ENCODE measurements at regions of chr16 and their contacts with region 1.

Region 1: GRCh38 chr16:49755313-49755620 is 100.6 kb downstream of the ZNF423 start:
- DNase-seq: peak in 1 of 5 donors; percentile 30
- ATAC-seq: peak; percentile 26 to 82 (median 64)
- H3K4me3 ChIP-seq: peak overlapping the region in 11 of 12 donors; percentile 19 to 55 (median 46)
- H3K27ac ChIP-seq: peak overlapping the region in 11 of 12 donors; percentile 52 to 92 (median 85)
- H3K4me1 ChIP-seq: peaks cover 0 to 45% (median 23%) of the 10 kb centered on the region in 12 donors
- H3K27me3 ChIP-seq: peaks cover 0 to 4% (median 0%) of the 10 kb centered on the region in 9 donors
- CTCF ChIP-seq: peak; percentile 19 to 72 (median 58)
- POLR2A ChIP-seq: no peak

Region 2: GRCh38 chr16:49484451-49484849 is 270.8 kb before region 1 on chr16:
- intact Hi-C with region 1: loop called in 1 of 10 experiments (anchors 10 kb)
- DNase-seq: peak; percentile 70 to 89 (median 77)
- ATAC-seq: peak; percentile 99 to 100 (median 100)
- H3K4me3 ChIP-seq: peak overlapping the region in 10 of 12 donors; percentile 2 to 44 (median 24)
- H3K27ac ChIP-seq: peak overlapping the region in 1 of 12 donors; percentile 34
- H3K4me1 ChIP-seq: peaks cover 0 to 13% (median 6%) of the 10 kb centered on the region in 12 donors
- H3K27me3 ChIP-seq: no peaks in the 10 kb centered on the region
- CTCF ChIP-seq: no peak
- POLR2A ChIP-seq: no peak

Region 3: DNA sequence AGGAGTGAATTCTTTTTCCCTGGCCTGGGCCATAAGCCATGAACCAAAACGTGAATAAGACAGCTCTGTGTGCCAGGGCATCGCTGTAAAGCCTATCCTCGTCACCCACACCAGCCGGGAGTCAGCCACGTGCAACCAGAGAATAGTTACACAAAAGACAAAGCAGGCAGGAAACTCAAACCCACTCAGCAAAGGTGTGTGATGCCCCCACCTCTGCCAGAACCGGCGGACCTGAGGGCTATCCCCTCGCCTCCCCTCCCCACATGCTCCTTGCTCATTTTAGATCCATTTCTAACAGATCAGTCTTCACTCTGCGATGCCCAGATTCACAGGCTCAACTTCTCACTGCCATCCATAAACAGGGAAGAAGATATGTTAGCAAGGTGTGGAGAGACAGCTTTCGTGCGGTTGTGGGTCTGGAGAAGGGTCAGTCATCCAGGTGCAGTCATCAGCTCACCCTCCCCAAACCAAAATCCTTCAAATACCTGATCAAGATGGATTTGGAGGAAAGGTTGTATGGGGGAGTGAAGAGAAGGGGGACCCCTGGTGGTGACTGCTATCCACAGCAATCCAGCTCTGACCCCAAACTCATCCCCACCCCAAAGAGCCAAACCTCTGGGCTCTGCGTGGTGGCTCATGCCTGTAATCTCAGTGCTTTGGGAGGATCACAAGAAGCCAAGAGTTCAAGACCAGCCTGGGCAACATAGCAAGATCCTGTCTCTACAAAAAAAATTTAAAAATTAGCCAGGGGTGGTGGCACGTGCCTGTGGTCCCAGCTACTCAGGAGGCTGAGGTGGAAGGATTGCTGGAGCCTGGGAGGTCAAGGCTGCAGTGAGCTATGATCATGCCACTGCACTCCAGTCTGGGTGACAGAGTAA is 162.5 kb before region 1 on chr16:
- intact Hi-C with region 1: loop called in 1 of 10 experiments (anchors 10 kb)
- DNase-seq: peak in 1 of 5 donors; percentile 28
- ATAC-seq: peak in 3 of 4 donors; percentile 49 to 58 (median 56)
- H3K4me3 ChIP-seq: no peak overlapping the region
- H3K27ac ChIP-seq: no peak overlapping the region
- H3K4me1 ChIP-seq: peaks cover 0 to 28% (median 11%) of the 10 kb centered on the region in 12 donors
- H3K27me3 ChIP-seq: peaks cover 0 to 2% (median 0%) of the 10 kb centered on the region in 9 donors
- CTCF ChIP-seq: peak; percentile 63 to 84 (median 75)
- POLR2A ChIP-seq: no peak

Region 4: GRCh38 chr16:49608779-49609178 is 146.5 kb before region 1 on chr16:
- intact Hi-C with region 1: loop called in 3 of 10 experiments (anchors 5 to 10 kb)
- DNase-seq: no peak
- ATAC-seq: peak; percentile 58 to 90 (median 88)
- H3K4me3 ChIP-seq: no peak overlapping the region
- H3K27ac ChIP-seq: no peak overlapping the region
- H3K4me1 ChIP-seq: peaks cover 0 to 2% (median 0%) of the 10 kb centered on the region in 12 donors
- H3K27me3 ChIP-seq: no peaks in the 10 kb centered on the region
- CTCF ChIP-seq: peak; percentile 31 to 68 (median 56)
- POLR2A ChIP-seq: no peak

Region 5: DNA sequence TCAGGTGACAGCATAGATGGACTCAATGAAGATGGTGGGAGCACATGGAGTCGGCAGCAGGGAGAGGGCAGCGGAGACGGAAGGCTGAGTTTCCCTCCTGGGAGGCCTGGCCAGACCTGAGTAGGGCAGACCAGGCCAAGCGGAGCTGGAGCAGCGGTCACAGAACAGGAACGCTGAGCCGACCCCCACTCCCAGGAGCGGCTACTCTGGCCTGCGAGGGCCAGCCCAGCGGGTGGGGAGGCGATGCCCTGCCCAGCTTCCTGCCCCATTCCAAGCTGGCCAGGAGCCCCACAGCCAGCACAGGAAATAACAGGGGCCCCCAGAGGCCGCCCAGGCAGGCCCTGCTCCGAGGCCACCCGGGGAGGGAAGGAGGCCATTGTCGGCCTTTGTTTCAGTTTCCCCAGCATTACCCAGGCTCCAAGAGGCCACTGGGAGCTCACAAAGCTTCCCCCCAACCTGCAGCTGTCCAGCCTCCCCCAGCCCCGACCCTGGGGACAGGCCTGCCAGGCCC is 20.9 kb after region 1 on chr16:
- intact Hi-C with region 1: loop called in 1 of 10 experiments (anchors 2 kb)
- DNase-seq: peak; percentile 59 to 82 (median 65)
- ATAC-seq: peak; percentile 64 to 84 (median 70)
- H3K4me3 ChIP-seq: peak overlapping the region in 4 of 12 donors; percentile 3 to 28 (median 12)
- H3K27ac ChIP-seq: peak overlapping the region; percentile 28 to 73 (median 63)
- H3K4me1 ChIP-seq: peaks cover 3 to 63% (median 32%) of the 10 kb centered on the region in 12 donors
- H3K27me3 ChIP-seq: no peaks in the 10 kb centered on the region
- CTCF ChIP-seq: no peak
- POLR2A ChIP-seq: no peak

Region 6: GRCh38 chr16:49834531-49835151 is 79.4 kb after region 1 on chr16:
- intact Hi-C with region 1: loop called in 1 of 10 experiments (anchors 5 kb)
- DNase-seq: peak in 4 of 5 donors; percentile 71 to 88 (median 80)
- ATAC-seq: peak; percentile 41 to 69 (median 60)
- H3K4me3 ChIP-seq: peak overlapping the region in 1 of 12 donors; percentile 15
- H3K27ac ChIP-seq: peak overlapping the region; percentile 66 to 89 (median 84)
- H3K4me1 ChIP-seq: peaks cover 5 to 84% (median 65%) of the 10 kb centered on the region in 12 donors
- H3K27me3 ChIP-seq: peaks cover 0 to 15% (median 0%) of the 10 kb centered on the region in 9 donors
- CTCF ChIP-seq: no peak
- POLR2A ChIP-seq: no peak

Measured in heart left ventricle (tissue), 16 donors.